ENCODE measurements at regions of chr19 and their contacts with region 1.

Region 1: DNA sequence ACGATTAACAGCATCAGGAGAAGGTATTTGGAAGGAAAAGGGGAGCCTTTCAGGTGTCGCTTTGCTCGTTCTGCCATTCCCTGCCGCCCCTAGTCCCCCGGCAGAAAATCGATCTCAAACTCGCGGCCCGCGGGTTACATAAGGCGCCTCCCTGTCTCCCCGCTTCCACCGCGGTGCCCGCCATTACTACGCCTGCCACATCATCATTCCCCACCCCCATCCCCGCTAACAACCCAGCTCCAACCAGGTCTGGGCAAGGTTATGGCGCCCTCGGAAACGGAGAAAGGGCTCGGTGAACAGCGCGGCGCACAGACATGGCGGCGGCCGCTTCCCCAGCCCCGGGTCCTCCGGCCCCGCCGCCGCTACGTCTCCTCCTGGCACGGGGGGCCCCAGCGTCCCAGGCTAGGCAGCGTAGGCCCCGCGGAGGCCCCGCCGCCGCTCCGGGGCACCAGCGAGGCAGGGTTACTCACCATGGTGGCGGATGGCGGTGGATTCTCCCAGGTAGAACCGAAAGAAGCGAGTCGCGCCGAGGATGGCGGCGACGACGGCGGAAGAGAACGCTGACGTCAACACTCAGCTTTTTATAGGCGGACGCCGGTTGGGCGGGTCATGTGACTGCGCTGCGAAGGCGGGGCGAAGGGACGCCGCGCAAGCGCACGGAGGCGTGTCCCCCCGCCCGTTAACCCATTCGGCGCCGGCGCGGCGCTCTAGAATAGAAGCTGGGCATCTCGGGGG is at the start of gene EEF2:
- DNase-seq: peak; percentile 90
- H3K4me3 Mint-ChIP-seq: peak within 1 kb of the TSS; percentile 96
- H3K27ac Mint-ChIP-seq: peak within 1 kb of the TSS; percentile 95
- H3K4me1 Mint-ChIP-seq: peaks cover 37% of the 10 kb centered on the region
- H3K27me3 Mint-ChIP-seq: no peaks in the 10 kb centered on the region
- total RNA-seq, gene EEF2: 3,113 to 3,225 TPM

Region 2: GRCh38 chr19:3762501-3763459 is 222.3 kb before region 1 on chr19 and contains the start of gene MRPL54:
- CTCF ChIA-PET with region 1: interaction called, 9 read pairs
- POLR2A ChIA-PET with region 1: no interaction called
- intact Hi-C with region 1: loop called (anchors 2 kb)
- DNase-seq: peak; percentile 100
- H3K4me3 Mint-ChIP-seq: peak within 1 kb of the TSS; percentile 99
- H3K27ac Mint-ChIP-seq: peak within 1 kb of the TSS; percentile 99
- H3K4me1 Mint-ChIP-seq: peaks cover 34% of the 10 kb centered on the region
- H3K27me3 Mint-ChIP-seq: no peaks in the 10 kb centered on the region
- total RNA-seq, gene MRPL54: 63.2 to 65.2 TPM

Region 3: GRCh38 chr19:3942790-3943409 is 42.2 kb before region 1 on chr19:
- CTCF ChIA-PET with region 1: no interaction called
- POLR2A ChIA-PET with region 1: no interaction called
- intact Hi-C with region 1: no loop called
- DNase-seq: no peak
- H3K4me3 Mint-ChIP-seq: no peak overlapping the region
- H3K27ac Mint-ChIP-seq: no peak overlapping the region
- H3K4me1 Mint-ChIP-seq: no peaks in the 10 kb centered on the region
- H3K27me3 Mint-ChIP-seq: peaks cover 2% of the 10 kb centered on the region

Region 4: GRCh38 chr19:4007021-4007835 is 22.2 kb after region 1 on chr19 and contains the start of gene PIAS4:
- CTCF ChIA-PET with region 1: interaction called, 18 read pairs
- POLR2A ChIA-PET with region 1: interaction called, 13 read pairs
- intact Hi-C with region 1: loop called (anchors 1 kb)
- DNase-seq: peak; percentile 96
- H3K4me3 Mint-ChIP-seq: peak within 1 kb of the TSS; percentile 83
- H3K27ac Mint-ChIP-seq: peak within 1 kb of the TSS; percentile 5
- H3K4me1 Mint-ChIP-seq: peaks cover 27% of the 10 kb centered on the region
- H3K27me3 Mint-ChIP-seq: no peaks in the 10 kb centered on the region
- total RNA-seq, gene PIAS4: 22.5 to 24.4 TPM

Region 5: DNA sequence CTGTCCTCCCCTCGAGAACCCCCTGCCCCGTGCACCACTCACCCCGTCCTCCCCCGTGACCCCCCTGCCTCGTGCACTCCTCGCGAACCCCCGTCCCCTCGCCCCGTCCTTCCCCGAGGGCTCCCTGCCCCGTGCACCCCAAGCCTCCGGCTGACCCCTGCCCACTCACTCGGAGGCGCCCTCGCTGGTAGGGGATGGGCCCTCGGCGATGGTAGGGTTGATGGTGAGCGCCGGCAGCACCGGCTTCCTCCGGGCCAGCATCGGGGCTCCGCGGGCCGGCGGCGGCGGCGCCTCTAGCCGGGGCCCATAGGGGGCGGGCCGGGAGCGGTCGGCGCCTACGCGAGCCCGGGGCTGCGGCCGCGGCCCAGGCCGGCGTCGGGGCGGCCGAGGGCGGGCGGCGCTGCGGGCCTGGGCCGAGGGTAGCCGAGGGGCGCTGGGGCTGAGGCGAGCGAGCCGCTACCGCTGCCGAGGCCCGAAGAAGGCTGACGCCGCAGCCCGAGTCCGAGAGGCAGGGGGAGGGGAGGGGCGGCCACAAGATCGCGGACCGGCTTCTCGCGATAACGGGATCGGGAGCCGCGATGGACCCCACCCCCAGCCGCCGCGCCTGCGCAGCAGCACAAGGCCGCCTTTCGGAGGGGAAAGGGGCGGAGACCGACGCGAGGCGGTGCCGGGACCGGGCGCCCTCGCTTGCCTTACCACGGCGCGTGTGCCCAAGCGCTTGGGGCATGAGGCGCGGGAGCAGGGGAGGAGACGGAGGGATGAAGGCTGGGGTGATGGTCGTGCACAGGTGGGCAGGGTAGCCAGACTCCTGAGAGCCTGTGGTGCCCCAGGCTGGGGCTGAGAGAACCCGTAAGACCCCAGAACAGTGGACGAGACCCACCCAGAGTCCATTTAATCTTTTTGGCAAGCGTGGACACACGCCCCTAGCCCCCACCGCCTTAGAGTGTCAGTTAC is 138.8 kb after region 1 on chr19 and contains the start of gene MAP2K2:
- CTCF ChIA-PET with region 1: no interaction called
- POLR2A ChIA-PET with region 1: no interaction called
- intact Hi-C with region 1: loop called (anchors 5 kb)
- DNase-seq: peak; percentile 97
- H3K4me3 Mint-ChIP-seq: peak within 1 kb of the TSS; percentile 86
- H3K27ac Mint-ChIP-seq: peak within 1 kb of the TSS; percentile 82
- H3K4me1 Mint-ChIP-seq: peaks cover 21% of the 10 kb centered on the region
- H3K27me3 Mint-ChIP-seq: no peaks in the 10 kb centered on the region
- total RNA-seq, gene MAP2K2: 128 to 129 TPM

Region 6: DNA sequence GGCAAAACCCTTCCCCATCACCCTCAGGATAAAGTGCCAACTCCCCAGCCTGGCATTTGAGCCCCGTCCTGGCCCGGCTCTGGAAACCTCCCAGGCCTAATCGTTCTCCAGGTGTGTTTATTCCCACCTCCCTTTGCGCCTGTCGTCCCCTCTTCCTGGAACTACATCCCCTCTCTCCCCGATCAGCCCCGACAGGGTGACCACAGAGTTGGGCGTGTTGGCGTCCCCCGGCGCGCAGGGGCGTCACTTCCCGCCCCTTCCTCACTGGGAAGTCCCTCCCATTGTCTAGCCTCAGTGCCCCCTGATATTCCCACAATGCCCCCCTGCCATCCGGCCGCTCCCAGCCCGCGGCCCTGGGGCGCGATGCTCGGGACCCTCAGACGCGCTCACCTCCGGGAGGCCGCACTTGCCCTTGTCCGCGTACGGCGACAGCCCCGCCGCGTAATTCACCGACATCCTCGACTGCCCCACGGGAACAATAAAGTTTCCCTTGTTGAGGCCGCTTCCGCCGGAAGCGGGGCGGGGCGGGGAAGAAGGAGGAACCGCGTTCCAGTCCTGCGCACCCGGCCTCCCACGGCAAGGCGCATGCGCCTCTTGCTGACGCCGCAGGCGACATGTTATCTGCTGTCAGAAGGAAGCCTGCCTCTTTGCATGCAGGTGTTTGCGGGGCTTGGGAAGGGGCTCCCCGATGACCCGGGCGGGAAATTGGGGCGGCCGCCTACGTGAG is 197.2 kb after region 1 on chr19 and contains the starts of genes ANKRD24 and SIRT6:
- CTCF ChIA-PET with region 1: no interaction called
- POLR2A ChIA-PET with region 1: no interaction called
- intact Hi-C with region 1: loop called (anchors 1 kb)
- DNase-seq: peak; percentile 98
- H3K4me3 Mint-ChIP-seq: peak within 1 kb of the TSS; percentile 96
- H3K27ac Mint-ChIP-seq: peak within 1 kb of the TSS; percentile 92
- H3K4me1 Mint-ChIP-seq: peaks cover 29% of the 10 kb centered on the region
- H3K27me3 Mint-ChIP-seq: no peaks in the 10 kb centered on the region
- total RNA-seq, gene ANKRD24: 1.7 to 1.8 TPM
- total RNA-seq, gene SIRT6: 28.0 to 29.7 TPM

Region 7: GRCh38 chr19:4471403-4472173 is 486.5 kb after region 1 on chr19:
- CTCF ChIA-PET with region 1: no interaction called
- POLR2A ChIA-PET with region 1: no interaction called
- intact Hi-C with region 1: loop called (anchors 5 kb)
- DNase-seq: peak; percentile 99
- H3K4me3 Mint-ChIP-seq: no peak overlapping the region
- H3K27ac Mint-ChIP-seq: no peak overlapping the region
- H3K4me1 Mint-ChIP-seq: peaks cover 21% of the 10 kb centered on the region
- H3K27me3 Mint-ChIP-seq: no peaks in the 10 kb centered on the region

Measured in activated CD4-positive, alpha-beta memory T cell treated with anti-CD3 and anti-CD28 coated beads for 36 hours (primary cell).